Breast epithelium (tissue), 4 donors: ENCODE measurements at regions of chr10 and their contacts with region 1.

Region 1: DNA sequence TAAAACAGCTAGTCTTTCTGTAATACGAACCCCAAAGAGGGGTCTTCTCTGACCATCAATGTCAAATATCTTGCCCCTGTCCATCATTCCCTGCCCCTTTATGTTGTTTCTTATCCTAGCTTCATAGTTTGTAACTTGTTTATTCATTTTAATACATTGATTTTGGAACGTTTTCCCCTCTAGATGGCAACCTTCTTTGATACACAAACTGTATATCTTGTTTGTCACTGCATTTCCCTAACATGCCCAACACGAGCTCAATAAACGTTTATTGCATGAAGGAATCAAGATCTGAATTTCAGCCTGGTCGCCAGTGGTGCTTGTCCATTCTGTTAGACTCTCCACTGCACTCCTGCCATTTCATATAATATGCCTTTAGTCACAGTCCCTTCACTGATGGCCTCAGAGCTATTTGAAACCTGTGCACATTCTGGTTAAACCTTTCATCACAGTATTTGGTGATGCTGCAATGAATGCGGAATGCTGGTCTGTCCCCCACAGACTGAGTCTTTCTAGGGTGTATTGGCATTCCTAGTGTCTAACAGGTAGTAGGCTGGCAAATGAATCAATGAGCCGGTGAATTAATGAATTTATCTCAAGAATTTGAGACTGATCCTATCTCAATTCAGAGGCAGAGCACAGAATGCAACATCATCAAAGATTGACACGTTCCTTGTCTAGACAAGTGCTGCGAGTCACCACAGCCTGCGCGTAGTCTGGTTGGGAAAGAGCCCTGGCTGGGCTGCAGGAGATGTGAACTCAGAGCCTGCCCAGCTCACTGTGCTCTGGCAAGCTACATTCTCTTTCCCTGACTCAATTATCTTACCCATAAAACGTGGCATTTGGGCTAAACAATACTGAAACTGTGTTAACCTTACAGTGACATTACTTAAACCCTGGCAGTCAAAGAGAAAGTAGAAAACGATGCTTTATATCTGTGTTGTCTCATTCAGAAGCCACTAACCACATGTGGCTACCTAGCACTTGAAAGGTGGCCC is 55.2 kb upstream of the FRMD4A start:
- DNase-seq: no peak
- H3K4me3 ChIP-seq: no peak overlapping the region
- H3K27ac ChIP-seq: no peak overlapping the region
- H3K4me1 ChIP-seq: no peaks in the 10 kb centered on the region
- H3K27me3 ChIP-seq: peaks cover 0 to 12% of the 10 kb centered on the region in 2 donors
- CTCF ChIP-seq: no peak
- POLR2A ChIP-seq: no peak

Region 2: DNA sequence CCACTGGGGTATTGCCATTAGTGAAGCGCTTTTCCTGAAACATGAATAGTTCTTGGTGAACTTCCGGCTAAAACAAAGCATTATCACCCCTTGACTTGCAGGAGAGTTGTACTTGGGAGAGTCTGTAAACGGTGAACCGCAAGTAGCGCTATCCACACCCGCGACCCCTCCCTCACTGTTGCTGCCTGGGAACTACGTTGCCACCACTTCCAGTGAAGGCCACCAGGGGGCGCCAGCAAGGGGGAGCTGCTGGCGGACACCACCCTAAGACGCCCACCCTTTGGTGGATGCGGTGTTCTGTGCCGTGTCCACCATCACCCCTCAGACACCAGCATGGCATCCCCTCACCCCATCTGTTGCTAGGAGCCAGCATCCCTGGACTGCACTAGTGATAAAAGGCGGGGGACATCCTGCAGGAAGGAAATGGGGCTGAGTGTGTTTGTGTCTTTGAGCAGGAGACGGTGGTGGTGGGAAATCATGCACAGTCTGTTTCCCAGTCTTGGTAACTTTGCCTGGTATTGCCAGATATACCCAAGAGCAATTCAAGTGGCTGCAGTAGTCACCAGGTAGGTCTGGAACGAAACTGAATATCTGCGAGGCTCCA is 353.4 kb before region 1 on chr10:
- intact Hi-C with region 1: no loop called
- DNase-seq: no peak
- H3K4me3 ChIP-seq: no peak overlapping the region
- H3K27ac ChIP-seq: no peak overlapping the region
- H3K4me1 ChIP-seq: no peaks in the 10 kb centered on the region
- H3K27me3 ChIP-seq: no peaks in the 10 kb centered on the region
- CTCF ChIP-seq: peak in 1 of 3 donors; percentile 7
- POLR2A ChIP-seq: no peak

Region 3: GRCh38 chr10:14312014-14312413 is 73.9 kb before region 1 on chr10:
- intact Hi-C with region 1: loop called (anchors 2 kb)
- DNase-seq: no peak
- H3K4me3 ChIP-seq: no peak overlapping the region
- H3K27ac ChIP-seq: no peak overlapping the region
- H3K4me1 ChIP-seq: no peaks in the 10 kb centered on the region
- H3K27me3 ChIP-seq: no peaks in the 10 kb centered on the region
- CTCF ChIP-seq: no peak
- POLR2A ChIP-seq: no peak